Activated CD4-positive, alpha-beta T cell treated with anti-CD3 and anti-CD28 coated beads for 36 hours (primary cell): ENCODE measurements at regions of chr12 and their contacts with region 1.

Region 1: GRCh38 chr12:126588586-126589249 is 1523.5 kb downstream of the AACS start:
- DNase-seq: peak; percentile 53
- ATAC-seq: peak; percentile 89
- H3K4me3 Mint-ChIP-seq: peak overlapping the region; percentile 34
- H3K27ac Mint-ChIP-seq: peak overlapping the region; percentile 73
- H3K4me1 Mint-ChIP-seq: peaks cover 29% of the 10 kb centered on the region
- H3K27me3 Mint-ChIP-seq: peaks cover 2% of the 10 kb centered on the region

Region 2: DNA sequence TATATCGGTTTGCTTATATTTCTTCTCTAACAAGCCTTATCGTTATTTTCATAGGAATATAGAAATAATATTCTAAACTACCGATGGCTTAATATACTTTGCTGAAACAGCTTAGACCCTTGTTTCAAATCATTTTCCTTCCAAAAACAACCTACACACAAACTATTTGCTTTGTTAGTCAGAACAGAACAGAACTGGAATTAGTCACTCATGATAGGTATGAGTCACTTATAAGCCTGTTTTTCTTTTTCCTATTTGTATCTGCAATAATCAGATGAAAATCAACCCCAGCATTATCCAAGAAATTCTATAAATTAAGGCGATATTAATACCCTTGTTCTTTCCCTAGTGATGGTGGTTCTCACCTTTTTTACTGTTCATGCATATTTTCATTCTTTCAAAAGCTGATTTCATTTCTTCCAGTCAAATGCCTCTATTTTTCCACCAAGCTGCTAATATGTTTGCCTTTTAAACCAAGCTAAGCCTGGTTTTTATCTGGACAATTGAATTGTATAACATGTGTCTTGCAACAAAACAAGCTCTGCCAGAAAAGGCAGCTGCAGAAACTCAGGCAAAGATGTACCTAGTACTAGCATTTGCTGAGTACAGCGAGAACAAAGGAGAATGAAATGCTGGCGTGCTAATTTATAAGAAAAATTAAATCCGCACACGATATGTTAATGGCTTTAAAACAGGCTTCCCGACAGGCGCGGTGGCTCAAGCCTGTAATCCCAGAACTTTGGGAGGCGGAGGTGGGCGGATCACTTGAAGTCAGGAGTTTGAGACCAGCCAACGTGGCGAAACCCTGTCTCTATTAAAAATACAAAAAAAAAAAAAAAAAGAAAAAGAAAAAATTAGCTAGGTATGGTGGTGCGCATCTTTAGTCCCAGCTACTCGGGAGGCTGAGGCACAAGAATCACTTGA is 105.3 kb before region 1 on chr12:
- CTCF ChIA-PET with region 1: no interaction called
- POLR2A ChIA-PET with region 1: no interaction called
- intact Hi-C with region 1: loop called (anchors 2 to 5 kb)
- DNase-seq: no peak
- ATAC-seq: peak; percentile 42
- H3K4me3 Mint-ChIP-seq: no peak overlapping the region
- H3K27ac Mint-ChIP-seq: no peak overlapping the region
- H3K4me1 Mint-ChIP-seq: peaks cover 9% of the 10 kb centered on the region
- H3K27me3 Mint-ChIP-seq: no peaks in the 10 kb centered on the region